ENCODE measurements at regions of chr21 and their contacts with region 1.

Region 1: GRCh38 chr21:37009740-37010341 is 3.3 kb downstream of the RIPPLY3 start:
- H3K4me3 Mint-ChIP-seq: peak overlapping the region; percentile 52
- H3K27ac Mint-ChIP-seq: no peak overlapping the region
- H3K4me1 Mint-ChIP-seq: peaks cover 7% of the 10 kb centered on the region
- H3K27me3 Mint-ChIP-seq: peaks cover 57% of the 10 kb centered on the region

Region 2: GRCh38 chr21:36934864-36935420 is 74.9 kb before region 1 on chr21:
- intact Hi-C with region 1: loop called (anchors 1 kb)
- H3K4me3 Mint-ChIP-seq: no peak overlapping the region
- H3K27ac Mint-ChIP-seq: no peak overlapping the region
- H3K4me1 Mint-ChIP-seq: no peaks in the 10 kb centered on the region
- H3K27me3 Mint-ChIP-seq: no peaks in the 10 kb centered on the region

Region 3: GRCh38 chr21:37297364-37297763 is 287.5 kb after region 1 on chr21:
- intact Hi-C with region 1: no loop called
- H3K4me3 Mint-ChIP-seq: no peak overlapping the region
- H3K27ac Mint-ChIP-seq: no peak overlapping the region
- H3K4me1 Mint-ChIP-seq: no peaks in the 10 kb centered on the region
- H3K27me3 Mint-ChIP-seq: no peaks in the 10 kb centered on the region

Measured in dendritic cell treated with granulocyte-macrophage colony-stimulating factor and Interleukin-4, amounts not matched to agents 40 ng/mL and 50 ng/mL, for 4 days (primary cell).